WTC11 (cell line): ENCODE measurements at regions of chr4 and their contacts with region 1.

Region 1: DNA sequence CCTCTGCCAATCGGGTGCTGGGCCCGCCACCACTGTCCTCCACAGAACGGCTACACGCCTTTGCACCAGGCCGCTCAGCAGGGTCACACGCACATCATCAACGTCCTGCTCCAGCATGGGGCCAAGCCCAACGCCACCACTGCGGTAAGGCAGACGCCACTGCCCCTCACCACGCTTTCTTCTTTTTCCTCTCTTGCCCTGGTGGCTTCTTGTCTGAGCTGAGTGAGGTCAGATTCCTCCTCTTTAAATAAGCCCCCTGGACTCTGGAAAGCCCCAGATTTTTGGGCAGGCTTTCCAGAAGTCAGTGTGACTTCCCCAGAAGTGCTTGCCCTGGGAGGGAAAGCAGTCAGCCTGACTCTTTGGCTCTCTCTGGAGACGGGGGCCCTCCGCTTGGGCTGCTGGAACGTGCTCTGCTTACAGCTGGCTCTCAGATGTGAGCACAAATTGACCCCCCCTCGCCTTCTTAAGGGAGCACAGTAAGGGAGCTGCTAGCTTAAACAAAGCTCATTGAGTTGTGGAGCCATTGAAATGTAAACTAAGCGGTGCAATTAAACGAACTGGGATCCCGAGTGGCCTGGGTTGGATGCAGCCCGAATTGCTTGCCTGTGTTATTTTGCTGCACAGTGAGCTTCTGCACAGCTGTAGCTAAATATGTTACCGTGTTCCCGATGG is 243.1 kb downstream of the ANK2 start:
- DNase-seq: peak; percentile 80
- ATAC-seq: peak; percentile 93
- H3K4me3 Mint-ChIP-seq: peak overlapping the region; percentile 66
- H3K27ac Mint-ChIP-seq: peak overlapping the region; percentile 99
- H3K4me1 Mint-ChIP-seq: peaks cover 60% of the 10 kb centered on the region
- H3K27me3 Mint-ChIP-seq: no peaks in the 10 kb centered on the region
- CTCF ChIP-seq: no peak

Region 2: GRCh38 chr4:113278324-113278934 is 14.1 kb before region 1 on chr4:
- CTCF ChIA-PET with region 1: interaction called, 16 read pairs
- POLR2A ChIA-PET with region 1: no interaction called
- DNase-seq: peak; percentile 79
- ATAC-seq: peak; percentile 100
- H3K4me3 Mint-ChIP-seq: no peak overlapping the region
- H3K27ac Mint-ChIP-seq: no peak overlapping the region
- H3K4me1 Mint-ChIP-seq: peaks cover 2% of the 10 kb centered on the region
- H3K27me3 Mint-ChIP-seq: no peaks in the 10 kb centered on the region
- CTCF ChIP-seq: peak; percentile 78